Activated CD4-positive, alpha-beta T cell treated with anti-CD3 and anti-CD28 coated beads, Interleukin-2, amount 10 ng/mL, durations not matched to agents 7 days and 5 days (primary cell): ENCODE measurements at regions of chr2 and their contacts with region 1.

Region 1: GRCh38 chr2:233053928-233054784 is 6.0 kb upstream of the INPP5D start:
- DNase-seq: peak; percentile 66
- H3K4me3 Mint-ChIP-seq: no peak overlapping the region
- H3K27ac Mint-ChIP-seq: no peak overlapping the region
- H3K4me1 Mint-ChIP-seq: peaks cover 14% of the 10 kb centered on the region
- H3K27me3 Mint-ChIP-seq: peaks cover 16% of the 10 kb centered on the region

Region 2: GRCh38 chr2:233033672-233034071 is 20.5 kb before region 1 on chr2:
- CTCF ChIA-PET with region 1: interaction called, 12 read pairs
- POLR2A ChIA-PET with region 1: no interaction called
- DNase-seq: no peak
- H3K4me3 Mint-ChIP-seq: no peak overlapping the region
- H3K27ac Mint-ChIP-seq: no peak overlapping the region
- H3K4me1 Mint-ChIP-seq: no peaks in the 10 kb centered on the region
- H3K27me3 Mint-ChIP-seq: no peaks in the 10 kb centered on the region

Region 3: GRCh38 chr2:233041722-233042323 is 12.3 kb before region 1 on chr2:
- CTCF ChIA-PET with region 1: interaction called, 16 read pairs
- POLR2A ChIA-PET with region 1: no interaction called
- DNase-seq: no peak
- H3K4me3 Mint-ChIP-seq: no peak overlapping the region
- H3K27ac Mint-ChIP-seq: no peak overlapping the region
- H3K4me1 Mint-ChIP-seq: no peaks in the 10 kb centered on the region
- H3K27me3 Mint-ChIP-seq: peaks cover 3% of the 10 kb centered on the region